ENCODE measurements at regions of chr2 and their contacts with region 1.

Region 1: GRCh38 chr2:48510329-48510728 is 19.6 kb upstream of the STON1 start:
- DNase-seq: no peak
- H3K4me3 ChIP-seq: no peak overlapping the region
- H3K27ac ChIP-seq: peak overlapping the region in 2 of 3 donors; percentile 48 to 74
- H3K4me1 ChIP-seq: peaks cover 26 to 36% of the 10 kb centered on the region in 2 donors
- H3K27me3 ChIP-seq: no peaks in the 10 kb centered on the region
- CTCF ChIP-seq: no peak
- POLR2A ChIP-seq: no peak

Region 2: DNA sequence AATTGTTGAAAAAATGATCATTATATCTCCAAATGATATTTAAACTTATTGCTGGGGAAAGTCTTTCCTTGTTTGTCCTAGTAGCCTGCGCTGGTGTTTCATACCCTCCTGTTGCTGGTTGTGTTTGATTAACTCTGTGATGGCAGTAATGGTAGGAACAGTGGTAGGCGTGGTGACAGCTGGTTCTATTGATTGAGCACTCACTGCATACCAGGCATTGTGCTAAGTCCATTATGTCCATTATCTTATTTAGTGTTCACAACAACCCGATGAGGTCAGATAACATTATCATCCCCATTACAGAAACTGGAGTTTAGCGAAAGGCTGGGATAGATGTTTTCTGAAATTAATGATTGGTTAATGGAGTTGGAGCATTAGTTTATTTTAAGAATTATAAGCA is 58.2 kb before region 1 on chr2:
- intact Hi-C with region 1: no loop called
- DNase-seq: no peak
- H3K4me3 ChIP-seq: no peak overlapping the region
- H3K27ac ChIP-seq: no peak overlapping the region
- H3K4me1 ChIP-seq: peaks cover 35 to 44% of the 10 kb centered on the region in 2 donors
- H3K27me3 ChIP-seq: no peaks in the 10 kb centered on the region
- CTCF ChIP-seq: no peak
- POLR2A ChIP-seq: no peak

Region 3: DNA sequence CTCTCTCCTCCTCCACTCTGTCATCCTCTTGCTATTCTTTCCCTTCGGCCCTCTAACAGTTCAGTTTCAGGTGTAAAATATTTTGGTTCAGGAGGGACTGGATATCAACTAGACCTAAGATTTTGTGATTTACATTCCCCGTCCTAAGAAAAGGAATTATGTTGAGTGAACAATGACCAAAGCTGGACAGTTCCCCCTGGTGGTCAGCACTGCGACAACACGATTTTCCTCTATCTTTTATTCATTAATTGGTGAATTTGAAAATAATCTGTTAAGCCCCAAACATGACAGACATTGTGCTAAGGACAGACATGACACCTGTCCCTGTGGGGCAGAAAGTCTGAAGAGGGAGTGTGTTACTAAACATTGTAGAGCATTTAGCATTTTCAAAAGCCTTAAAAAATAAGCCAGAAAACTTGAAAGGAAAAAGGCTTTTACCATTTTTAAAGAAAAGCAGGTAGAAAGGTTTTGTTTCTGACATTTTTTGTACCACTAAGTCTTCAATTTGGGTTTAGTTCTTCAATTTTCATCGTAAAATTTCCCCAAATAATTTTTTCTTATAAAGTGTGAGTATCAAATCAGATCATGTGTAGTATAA is 78.9 kb after region 1 on chr2:
- intact Hi-C with region 1: loop called (anchors 10 kb)
- DNase-seq: peak; percentile 46 to 61
- H3K4me3 ChIP-seq: no peak overlapping the region
- H3K27ac ChIP-seq: no peak overlapping the region
- H3K4me1 ChIP-seq: no peaks in the 10 kb centered on the region
- H3K27me3 ChIP-seq: no peaks in the 10 kb centered on the region
- CTCF ChIP-seq: peak; percentile 33 to 77 (median 71)
- POLR2A ChIP-seq: no peak